ENCODE measurements at regions of chr2 and their contacts with region 1.

Region 1: GRCh38 chr2:84022810-84023431 is 436.2 kb downstream of the SUCLG1 start:
- DNase-seq: peak; percentile 72
- ATAC-seq: peak; percentile 87
- H3K4me3 ChIP-seq: no peak overlapping the region
- H3K27ac ChIP-seq: no peak overlapping the region
- H3K4me1 ChIP-seq: 0 out of 2 replicates have a peak, but pooled peaks cover 9% of the 10 kb centered on the region
- H3K27me3 ChIP-seq: no peaks in the 10 kb centered on the region
- CTCF ChIP-seq: peak; percentile 68
- EP300 ChIP-seq: no peak
- POLR2A ChIP-seq: no peak
- RAD21 ChIP-seq: peak; percentile 70

Region 2: GRCh38 chr2:84041506-84041905 is 18.6 kb after region 1 on chr2:
- CTCF ChIA-PET with region 1: no interaction called
- POLR2A ChIA-PET with region 1: no interaction called
- in situ Hi-C with region 1: no loop called
- intact Hi-C with region 1: no loop called
- DNase-seq: no peak
- ATAC-seq: no peak
- H3K4me3 ChIP-seq: no peak overlapping the region
- H3K27ac ChIP-seq: no peak overlapping the region
- H3K4me1 ChIP-seq: no peaks in the 10 kb centered on the region
- H3K27me3 ChIP-seq: peaks cover 0 to 11% of the 10 kb centered on the region in 2 experiments; a peak in 2 of 5 replicates
- CTCF ChIP-seq: no peak
- EP300 ChIP-seq: no peak
- POLR2A ChIP-seq: no peak
- RAD21 ChIP-seq: no peak

Region 3: GRCh38 chr2:84077492-84077891 is 54.6 kb after region 1 on chr2:
- CTCF ChIA-PET with region 1: interaction called, 11 read pairs
- POLR2A ChIA-PET with region 1: no interaction called
- in situ Hi-C with region 1: no loop called
- intact Hi-C with region 1: loop called (anchors 1 kb)
- DNase-seq: peak; percentile 20
- ATAC-seq: peak; percentile 79
- H3K4me3 ChIP-seq: no peak overlapping the region
- H3K27ac ChIP-seq: no peak overlapping the region
- H3K4me1 ChIP-seq: no peaks in the 10 kb centered on the region
- H3K27me3 ChIP-seq: no peaks in the 10 kb centered on the region
- CTCF ChIP-seq: peak; percentile 57
- EP300 ChIP-seq: no peak
- POLR2A ChIP-seq: no peak
- RAD21 ChIP-seq: no peak

Region 4: GRCh38 chr2:84102274-84102673 is 79.4 kb after region 1 on chr2:
- CTCF ChIA-PET with region 1: no interaction called
- POLR2A ChIA-PET with region 1: no interaction called
- in situ Hi-C with region 1: no loop called
- intact Hi-C with region 1: no loop called
- DNase-seq: no peak
- ATAC-seq: no peak
- H3K4me3 ChIP-seq: no peak overlapping the region
- H3K27ac ChIP-seq: no peak overlapping the region
- H3K4me1 ChIP-seq: peaks cover 4% of the 10 kb centered on the region; the same call in 1 of the 2 replicates
- H3K27me3 ChIP-seq: no peaks in the 10 kb centered on the region; a peak in 1 of 5 replicates
- CTCF ChIP-seq: no peak
- EP300 ChIP-seq: no peak
- POLR2A ChIP-seq: no peak
- RAD21 ChIP-seq: no peak

Region 5: GRCh38 chr2:84257831-84258230 is 234.9 kb after region 1 on chr2:
- CTCF ChIA-PET with region 1: interaction called, 7 read pairs
- POLR2A ChIA-PET with region 1: interaction called, 4 read pairs
- in situ Hi-C with region 1: no loop called
- intact Hi-C with region 1: loop called (anchors 1 kb)
- DNase-seq: peak; percentile 42
- ATAC-seq: peak; percentile 99
- H3K4me3 ChIP-seq: no peak overlapping the region
- H3K27ac ChIP-seq: no peak overlapping the region
- H3K4me1 ChIP-seq: peaks cover 18% of the 10 kb centered on the region
- H3K27me3 ChIP-seq: no peaks in the 10 kb centered on the region
- CTCF ChIP-seq: peak; percentile 75
- EP300 ChIP-seq: no peak
- POLR2A ChIP-seq: no peak
- RAD21 ChIP-seq: peak; percentile 62; the same call in 1 of the 2 replicates

Region 6: DNA sequence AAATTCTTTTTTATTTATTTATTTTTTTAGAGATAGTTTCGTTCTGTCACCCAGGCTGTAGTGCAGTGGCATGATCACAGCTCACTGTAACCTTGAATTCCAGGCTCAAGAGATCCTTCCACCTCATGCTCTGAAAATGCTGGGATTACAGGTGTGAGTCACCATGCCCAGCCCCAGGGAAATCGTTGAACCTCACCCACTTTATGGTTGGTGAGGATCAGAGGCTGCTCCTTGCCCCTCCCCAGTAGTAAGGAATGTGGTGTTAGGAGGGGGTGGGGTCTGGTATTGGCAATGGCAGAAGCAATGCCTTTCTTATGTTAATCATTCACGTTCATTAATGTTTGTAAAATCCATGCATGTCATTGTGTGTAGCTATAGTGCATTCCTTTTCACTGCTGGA is 274.2 kb after region 1 on chr2:
- CTCF ChIA-PET with region 1: interaction called, 64 read pairs
- POLR2A ChIA-PET with region 1: interaction called, 15 read pairs
- in situ Hi-C with region 1: loop called (anchors 5 kb)
- intact Hi-C with region 1: no loop called
- DNase-seq: peak; percentile 88
- ATAC-seq: peak; percentile 33
- H3K4me3 ChIP-seq: no peak overlapping the region
- H3K27ac ChIP-seq: peak overlapping the region; percentile 43
- H3K4me1 ChIP-seq: peaks cover 99% of the 10 kb centered on the region
- H3K27me3 ChIP-seq: no peaks in the 10 kb centered on the region
- CTCF ChIP-seq: no peak
- EP300 ChIP-seq: peak; percentile 57 to 64; a peak in 2 of 4 replicates
- POLR2A ChIP-seq: no peak
- RAD21 ChIP-seq: peak; percentile 45; the same call in 1 of the 2 replicates

Region 7: GRCh38 chr2:84302513-84303412 is 279.8 kb after region 1 on chr2:
- CTCF ChIA-PET with region 1: interaction called, 64 read pairs
- POLR2A ChIA-PET with region 1: interaction called, 15 read pairs
- in situ Hi-C with region 1: loop called (anchors 5 kb)
- intact Hi-C with region 1: loop called (anchors 1 kb)
- DNase-seq: peak; percentile 83
- ATAC-seq: peak; percentile 69
- H3K4me3 ChIP-seq: no peak overlapping the region
- H3K27ac ChIP-seq: peak overlapping the region; percentile 39
- H3K4me1 ChIP-seq: peaks cover 57% of the 10 kb centered on the region
- H3K27me3 ChIP-seq: no peaks in the 10 kb centered on the region
- CTCF ChIP-seq: peak; percentile 94
- EP300 ChIP-seq: peak; percentile 28 to 90; a peak in 2 of 4 replicates
- POLR2A ChIP-seq: no peak
- RAD21 ChIP-seq: peak; percentile 91

Region 8: DNA sequence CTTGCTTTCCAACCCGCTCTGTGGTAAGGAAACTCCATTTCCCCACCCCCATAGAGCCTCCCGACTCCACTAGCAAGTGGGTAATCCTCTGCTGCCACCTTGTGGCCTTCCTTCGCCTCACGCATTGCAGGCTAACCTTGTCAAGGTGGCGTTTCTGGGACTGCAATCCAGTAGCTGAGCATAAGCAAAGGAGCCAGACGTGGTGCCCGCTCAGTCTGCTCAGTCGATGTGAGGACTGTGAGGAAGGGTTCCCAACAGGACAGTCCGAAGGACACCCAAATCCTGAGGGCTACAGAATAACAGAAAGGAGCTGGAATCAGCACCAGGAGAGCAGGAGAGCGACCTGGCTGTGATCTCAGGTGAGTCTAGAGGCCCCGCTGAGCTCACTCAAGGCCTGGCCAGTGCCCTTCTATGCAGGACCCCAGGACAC is 292.0 kb after region 1 on chr2:
- CTCF ChIA-PET with region 1: interaction called, 13 read pairs
- POLR2A ChIA-PET with region 1: no interaction called
- in situ Hi-C with region 1: no loop called
- intact Hi-C with region 1: loop called (anchors 1 kb)
- DNase-seq: peak; percentile 81
- ATAC-seq: peak; percentile 99
- H3K4me3 ChIP-seq: no peak overlapping the region
- H3K27ac ChIP-seq: no peak overlapping the region
- H3K4me1 ChIP-seq: no peaks in the 10 kb centered on the region
- H3K27me3 ChIP-seq: no peaks in the 10 kb centered on the region
- CTCF ChIP-seq: peak; percentile 100
- EP300 ChIP-seq: no peak
- POLR2A ChIP-seq: no peak
- RAD21 ChIP-seq: peak; percentile 98

Measured in HepG2 (cell line).